Uterus (tissue), 4 donors: ENCODE measurements at regions of chr19 and their contacts with region 1.

Region 1: DNA sequence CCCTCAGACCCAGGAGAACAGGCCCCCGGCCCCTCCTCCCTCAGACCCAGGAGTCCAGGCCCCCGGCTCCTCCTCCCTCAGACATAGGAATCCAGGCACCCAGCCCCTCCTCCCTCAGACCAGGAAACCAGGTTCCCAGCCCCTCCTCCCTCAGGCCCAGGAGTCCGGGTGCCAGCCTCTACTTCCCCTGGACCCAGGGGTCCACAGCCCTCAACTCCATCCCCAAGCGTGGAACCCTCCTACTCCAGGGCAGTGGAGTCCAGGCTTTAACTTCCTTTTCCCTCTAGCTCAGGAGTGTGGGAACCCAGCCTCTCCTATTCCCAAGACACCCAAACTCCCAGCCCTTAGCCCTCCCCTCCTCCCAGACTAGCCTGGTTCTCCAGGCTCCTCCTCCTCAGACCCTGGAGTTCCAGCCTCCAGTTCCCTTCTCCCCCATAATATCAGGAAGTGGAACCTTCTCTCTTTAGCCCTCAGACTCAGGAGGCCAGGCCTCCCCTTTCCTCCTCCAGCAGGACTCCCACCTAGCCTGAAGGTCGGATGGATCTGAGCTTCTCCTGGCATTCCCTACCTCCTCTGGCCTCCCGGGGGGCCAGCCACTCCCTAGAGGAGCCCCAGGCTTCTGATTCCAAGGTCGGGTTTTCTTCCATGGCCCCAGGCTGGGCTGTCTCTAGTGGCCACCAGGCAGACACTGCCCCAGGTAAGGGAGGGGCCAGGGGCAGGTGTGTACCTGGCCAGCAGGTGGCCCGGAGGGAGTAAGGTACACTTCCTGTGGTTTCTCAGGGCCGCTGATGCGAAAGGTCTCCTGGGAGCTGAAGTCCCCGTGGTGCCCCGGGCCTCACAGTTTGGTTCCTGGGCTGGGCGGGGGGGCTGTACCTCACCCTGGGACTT is at the start of gene TMC4:
- DNase-seq: no peak
- H3K4me3 ChIP-seq: no peak within 1 kb of the TSS
- H3K27ac ChIP-seq: peak within 1 kb of the TSS in 1 of 2 donors; percentile 54
- H3K4me1 ChIP-seq: no peaks in the 10 kb centered on the region
- H3K27me3 ChIP-seq: no peaks in the 10 kb centered on the region
- CTCF ChIP-seq: no peak
- POLR2A ChIP-seq: peak in 1 of 2 donors; percentile 30
- total RNA-seq, gene TMC4: 1.3 to 31.0 (median 3.0) TPM in 3 of 4 donors, not detected in the other

Region 2: DNA sequence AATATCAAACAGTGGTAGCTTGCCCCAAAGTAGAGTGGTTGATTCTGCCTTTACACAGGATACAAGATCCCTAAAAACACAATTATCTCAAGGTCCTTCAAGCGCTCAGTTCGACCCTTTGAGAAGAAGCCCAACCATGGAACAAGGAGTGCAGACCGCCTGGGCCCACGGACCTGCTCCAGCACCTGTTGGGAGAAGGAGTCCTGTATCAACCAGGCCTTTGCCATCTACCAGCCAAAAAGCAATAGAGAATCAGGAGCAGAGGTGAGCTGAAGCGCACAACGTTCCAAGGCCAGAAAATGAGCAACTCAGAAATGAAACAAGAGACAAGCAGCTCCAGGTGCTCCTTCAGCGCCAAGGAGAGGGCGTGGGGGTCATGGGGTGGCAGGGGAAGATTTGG is 56.4 kb after region 1 on chr19:
- intact Hi-C with region 1: loop called (anchors 5 kb)
- DNase-seq: no peak
- H3K4me3 ChIP-seq: no peak overlapping the region
- H3K27ac ChIP-seq: no peak overlapping the region
- H3K4me1 ChIP-seq: no peaks in the 10 kb centered on the region
- H3K27me3 ChIP-seq: no peaks in the 10 kb centered on the region
- CTCF ChIP-seq: no peak
- POLR2A ChIP-seq: no peak